A673 (cell line): ENCODE measurements at regions of chr1 and their contacts with region 1.

Region 1: DNA sequence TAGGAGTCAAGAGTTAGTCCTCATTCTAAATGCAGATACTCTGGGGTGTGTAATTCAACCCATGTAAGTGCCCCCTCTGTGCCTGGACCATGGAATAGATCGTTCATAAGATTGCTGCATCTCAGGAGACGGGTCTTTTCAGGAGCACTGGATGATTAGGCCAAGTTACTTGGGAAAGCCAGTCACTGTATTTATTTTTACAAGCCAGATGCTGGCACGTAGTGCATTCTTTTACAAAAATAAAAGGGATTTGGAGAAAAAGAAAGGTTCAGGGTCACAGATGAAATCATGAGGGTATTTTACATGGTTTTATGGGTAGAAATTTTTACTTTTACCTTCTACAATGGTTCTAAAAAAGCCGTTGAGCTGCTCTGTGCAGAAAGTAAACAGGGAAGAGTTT is 102.6 kb upstream of the UBE2U start:
- DNase-seq: no peak
- H3K4me3 ChIP-seq: no peak overlapping the region
- H3K27ac ChIP-seq: no peak overlapping the region
- H3K4me1 ChIP-seq: peaks cover 8% of the 10 kb centered on the region
- H3K27me3 ChIP-seq: no peaks in the 10 kb centered on the region
- CTCF ChIP-seq: no peak

Region 2: GRCh38 chr1:64042331-64043100 is 58.3 kb before region 1 on chr1:
- CTCF ChIA-PET with region 1: no interaction called
- POLR2A ChIA-PET with region 1: no interaction called
- intact Hi-C with region 1: loop called (anchors 10 kb)
- DNase-seq: peak; percentile 43
- H3K4me3 ChIP-seq: no peak overlapping the region
- H3K27ac ChIP-seq: no peak overlapping the region
- H3K4me1 ChIP-seq: peaks cover 5% of the 10 kb centered on the region
- H3K27me3 ChIP-seq: no peaks in the 10 kb centered on the region
- CTCF ChIP-seq: no peak

Region 3: DNA sequence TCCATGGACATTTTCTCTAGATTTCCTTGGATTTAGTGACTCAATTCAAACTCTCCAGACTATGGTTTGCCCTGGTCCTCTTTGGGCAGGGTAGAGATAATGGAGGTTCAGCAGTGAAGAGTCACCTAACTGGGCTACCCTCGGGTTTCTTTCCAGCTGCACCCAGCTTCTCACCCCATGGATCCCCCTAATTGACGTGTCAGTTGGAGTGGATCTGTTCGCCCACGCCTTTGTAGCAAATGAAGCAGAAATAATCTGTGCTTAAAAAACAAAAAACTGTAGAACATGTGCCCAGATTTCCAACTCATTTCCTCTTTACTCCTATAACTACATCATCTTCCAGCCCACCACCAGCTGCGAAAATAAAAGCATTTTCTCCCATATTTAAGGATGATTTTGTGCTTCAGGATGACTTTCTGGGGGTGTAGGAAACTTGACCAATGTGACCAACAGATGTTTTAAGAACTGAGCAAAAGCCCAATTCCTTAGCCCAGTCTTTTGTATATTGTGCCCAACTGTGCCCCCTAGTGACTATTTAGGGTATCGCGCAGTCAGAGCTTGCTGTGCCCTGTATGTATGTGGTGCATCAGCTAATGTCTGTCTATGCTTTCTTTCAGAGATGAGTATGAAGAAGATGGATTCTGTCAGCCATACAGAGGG is 36.1 kb after region 1 on chr1:
- CTCF ChIA-PET with region 1: no interaction called
- POLR2A ChIA-PET with region 1: no interaction called
- intact Hi-C with region 1: no loop called
- DNase-seq: peak; percentile 92
- H3K4me3 ChIP-seq: no peak overlapping the region
- H3K27ac ChIP-seq: no peak overlapping the region
- H3K4me1 ChIP-seq: peaks cover 27% of the 10 kb centered on the region
- H3K27me3 ChIP-seq: no peaks in the 10 kb centered on the region
- CTCF ChIP-seq: peak; percentile 96